BJ (cell line): ENCODE measurements at regions of chr17 and their contacts with region 1.

Region 1: GRCh38 chr17:31433091-31433790 is 41.8 kb downstream of the RAB11FIP4 start:
- DNase-seq: no peak
- H3K4me3 ChIP-seq: no peak overlapping the region
- H3K27me3 ChIP-seq: peaks cover 13% of the 10 kb centered on the region
- CTCF ChIP-seq: no peak

Region 2: GRCh38 chr17:31517524-31517923 is 84.3 kb after region 1 on chr17:
- CTCF ChIA-PET with region 1: interaction called, 139 read pairs
- POLR2A ChIA-PET with region 1: no interaction called
- DNase-seq: no peak
- H3K4me3 ChIP-seq: no peak overlapping the region
- H3K27me3 ChIP-seq: peaks cover 7% of the 10 kb centered on the region; the same call in 1 of the 2 replicates
- CTCF ChIP-seq: peak; percentile 29; the same call in 1 of the 2 replicates

Region 3: DNA sequence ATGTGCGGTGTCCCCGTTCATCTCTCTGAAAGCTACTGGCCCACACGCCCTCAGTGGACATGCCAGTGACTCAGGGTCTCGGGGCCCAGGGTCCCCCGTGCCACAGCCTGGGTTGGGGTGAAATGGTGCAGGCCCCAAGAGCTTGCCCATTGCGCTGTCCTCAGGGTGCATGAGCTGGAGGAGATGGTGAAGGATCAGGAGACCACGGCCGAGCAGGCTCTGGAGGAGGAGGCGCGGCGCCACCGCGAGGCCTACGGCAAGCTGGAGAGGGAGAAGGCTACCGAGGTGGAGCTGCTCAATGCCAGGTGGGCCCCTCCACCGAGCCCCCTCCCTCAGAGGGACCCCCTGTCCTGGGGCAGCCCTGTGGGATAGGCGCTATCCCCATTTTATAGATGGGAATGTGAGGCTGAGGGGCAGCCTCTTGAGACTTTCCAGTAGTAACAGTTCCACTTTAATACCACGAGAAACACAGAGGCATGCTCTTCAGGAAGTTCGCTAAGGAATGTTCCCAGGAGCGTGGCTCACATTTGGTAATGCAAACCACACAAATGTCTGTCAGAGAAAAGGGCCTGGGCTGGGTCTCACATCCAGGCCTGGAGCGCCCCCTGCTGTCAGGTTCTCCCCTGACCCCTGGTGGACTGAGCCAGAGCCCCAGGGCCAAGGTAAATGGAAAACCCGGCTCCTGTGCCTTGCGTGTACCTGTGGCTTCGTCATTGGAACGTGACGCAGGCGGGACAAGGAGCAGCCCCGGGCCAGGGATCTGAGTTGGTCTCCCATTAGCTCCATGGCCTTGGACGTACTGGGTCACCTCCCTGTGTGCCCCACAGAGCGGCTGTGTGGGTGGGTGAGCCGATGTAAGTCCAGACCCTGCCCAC is 91.9 kb after region 1 on chr17:
- CTCF ChIA-PET with region 1: interaction called, 139 read pairs
- POLR2A ChIA-PET with region 1: no interaction called
- DNase-seq: peak; percentile 47
- H3K4me3 ChIP-seq: no peak overlapping the region
- H3K27me3 ChIP-seq: no peaks in the 10 kb centered on the region
- CTCF ChIP-seq: peak; percentile 95

Region 4: DNA sequence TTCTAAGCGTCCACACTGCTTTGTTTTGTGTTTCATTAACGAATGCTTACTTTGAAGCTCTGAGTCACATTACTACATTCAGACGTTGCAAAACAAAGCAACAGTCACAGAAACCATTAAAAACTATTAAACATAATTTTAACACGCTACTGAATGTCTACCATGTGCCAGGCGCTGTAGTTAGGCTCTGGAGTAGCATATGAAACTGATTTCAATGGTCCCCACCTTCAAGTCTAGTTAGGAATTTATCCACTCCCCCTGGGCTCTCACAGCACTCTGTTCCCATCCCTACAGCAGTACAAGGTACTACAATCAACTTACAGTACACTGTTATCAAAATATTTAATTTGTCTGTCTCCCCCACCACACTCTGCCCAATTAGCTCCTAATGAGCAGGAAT is 467.6 kb after region 1 on chr17:
- CTCF ChIA-PET with region 1: interaction called, 11 read pairs
- POLR2A ChIA-PET with region 1: no interaction called
- DNase-seq: no peak
- H3K4me3 ChIP-seq: peak overlapping the region; percentile 77
- H3K27me3 ChIP-seq: no peaks in the 10 kb centered on the region
- CTCF ChIP-seq: no peak